Posterior cingulate gyrus (tissue), 11 donors: ENCODE measurements at regions of chr5 and their contacts with region 1.

Region 1: GRCh38 chr5:175729829-175730277 is 72.0 kb downstream of the HRH2 start:
- DNase-seq: peak; percentile 90 to 99 (median 97)

Region 2: DNA sequence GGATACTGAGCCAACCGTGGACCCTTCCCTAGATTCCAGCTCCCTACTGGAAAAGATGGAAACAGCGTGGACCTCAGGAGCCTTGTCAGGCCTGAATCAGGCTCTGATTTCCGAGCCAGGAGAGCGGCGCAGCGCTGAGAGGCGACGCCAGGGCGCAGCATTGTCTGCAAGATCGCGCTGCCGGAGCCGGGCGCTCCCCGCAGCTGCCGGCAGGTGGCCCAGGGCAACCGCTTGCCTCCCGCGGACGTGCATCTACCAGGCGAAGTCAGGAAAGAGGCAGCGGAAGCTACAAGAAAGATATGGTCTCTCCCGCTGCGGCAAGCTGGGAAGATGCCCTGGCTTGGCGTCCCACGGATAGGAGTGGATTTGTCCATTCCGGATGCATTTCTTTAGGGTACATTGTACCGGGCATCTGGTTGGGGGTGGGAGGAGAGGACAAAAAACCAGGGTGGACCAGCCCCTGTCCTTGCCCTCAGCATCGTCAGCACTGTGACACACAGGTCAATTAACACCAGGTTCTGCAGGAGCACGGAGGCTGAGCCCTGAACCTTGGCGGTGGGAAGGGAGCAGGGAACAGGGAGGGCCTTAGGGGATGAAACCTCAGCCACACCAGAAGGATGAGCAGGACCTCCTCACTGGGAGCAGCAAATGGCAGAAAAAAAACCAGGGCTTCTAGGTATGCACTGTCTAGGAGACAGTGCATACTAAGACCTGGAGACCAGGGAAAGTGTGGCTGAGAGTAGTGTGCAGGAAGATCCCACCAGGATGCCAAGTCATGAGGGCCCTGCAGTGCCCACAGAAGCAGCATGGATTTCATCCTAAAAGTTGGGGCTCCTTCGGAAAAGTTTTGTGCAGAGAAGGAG is 195.6 kb before region 1 on chr5:
- intact Hi-C with region 1: loop called (anchors 5 kb)
- DNase-seq: peak; percentile 74 to 98 (median 85)

Region 3: DNA sequence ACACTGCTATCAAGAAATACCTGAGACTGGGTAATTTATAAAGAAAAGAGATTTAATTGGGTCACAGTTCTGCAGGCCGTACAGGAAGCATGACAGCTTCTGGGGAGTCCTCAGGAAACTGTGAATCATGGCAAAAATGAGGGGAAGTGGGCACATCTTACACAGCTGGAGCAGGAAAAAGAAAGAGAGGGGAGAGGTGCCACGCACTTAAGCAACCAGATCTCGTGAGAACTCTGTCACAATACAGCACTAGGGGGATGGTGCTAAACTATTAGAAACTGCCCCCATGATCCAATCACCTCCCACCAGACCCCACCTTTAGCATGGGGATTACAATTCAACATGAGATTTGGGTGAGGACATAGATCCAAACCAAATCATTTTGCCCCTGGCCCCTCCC is 36.0 kb after region 1 on chr5:
- intact Hi-C with region 1: no loop called
- DNase-seq: no peak

Region 4: GRCh38 chr5:175873088-175873454 is 143.2 kb after region 1 on chr5:
- intact Hi-C with region 1: loop called (anchors 10 kb)
- DNase-seq: peak in 9 of 10 donors; percentile 41 to 96 (median 75)